ENCODE measurements at regions of chr4 and their contacts with region 1.

Region 1: DNA sequence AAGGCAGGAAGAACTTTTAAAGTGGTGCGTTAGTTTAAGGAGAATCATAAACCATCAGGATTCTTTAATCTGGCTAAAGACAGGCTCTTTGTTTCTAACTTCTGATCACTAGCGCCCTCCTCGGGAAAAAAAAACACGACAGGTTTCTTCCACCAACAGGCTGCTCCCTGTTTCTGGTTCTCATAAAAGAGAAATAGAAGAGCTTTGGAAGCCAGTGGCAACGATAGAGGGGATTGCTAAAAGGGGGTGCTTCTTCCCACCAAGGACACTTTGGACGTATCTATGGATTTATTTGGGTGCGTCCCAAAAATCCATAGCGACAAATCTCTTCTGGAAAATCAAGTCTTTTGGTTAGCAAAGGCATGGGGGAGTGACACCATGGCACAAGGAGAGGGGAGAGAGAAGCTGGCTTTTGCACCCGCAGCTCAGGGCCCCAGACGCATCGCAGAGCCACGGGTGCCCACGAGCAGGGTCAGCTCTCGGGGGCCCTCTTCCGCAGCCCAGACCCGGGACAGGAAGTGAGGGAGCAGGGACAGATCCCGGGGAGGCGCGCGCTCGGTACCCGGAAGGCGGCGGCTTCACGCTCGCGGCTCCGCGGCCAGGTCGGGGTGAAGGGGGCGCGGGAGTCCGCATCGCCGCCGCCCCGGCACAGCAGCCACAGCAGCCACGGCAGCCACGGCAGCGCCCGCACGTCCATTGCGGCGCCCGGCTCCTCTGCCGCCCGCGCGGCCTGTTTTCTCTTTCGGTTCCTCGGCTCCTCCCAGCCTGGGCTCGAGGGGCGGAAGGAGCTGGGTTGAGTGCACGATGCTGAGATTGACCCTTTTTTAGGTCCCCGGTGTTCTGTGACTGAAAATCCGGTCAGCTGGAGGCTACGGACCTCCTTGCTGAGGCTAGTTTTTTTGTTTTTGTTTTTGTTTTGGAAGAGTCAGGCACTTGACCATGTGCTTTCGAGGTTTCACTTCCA is at the start of gene CTSO:
- DNase-seq: peak; percentile 75
- H3K4me3 ChIP-seq: peak within 1 kb of the TSS; percentile 44 to 78 (median 71)
- H3K27ac ChIP-seq: peak within 1 kb of the TSS; percentile 96 to 97 (median 97)
- H3K4me1 ChIP-seq: peaks cover 7 to 29% (median 10%) of the 10 kb centered on the region in 4 donors
- H3K27me3 ChIP-seq: no peaks in the 10 kb centered on the region
- CTCF ChIP-seq: peak; percentile 57 to 71 (median 69)
- EP300 ChIP-seq: no peak
- POLR2A ChIP-seq: peak; percentile 57
- total RNA-seq, gene CTSO: 8.2 to 18.7 (median 12.5) TPM in 3 of 4 donors, not detected in the other

Region 2: DNA sequence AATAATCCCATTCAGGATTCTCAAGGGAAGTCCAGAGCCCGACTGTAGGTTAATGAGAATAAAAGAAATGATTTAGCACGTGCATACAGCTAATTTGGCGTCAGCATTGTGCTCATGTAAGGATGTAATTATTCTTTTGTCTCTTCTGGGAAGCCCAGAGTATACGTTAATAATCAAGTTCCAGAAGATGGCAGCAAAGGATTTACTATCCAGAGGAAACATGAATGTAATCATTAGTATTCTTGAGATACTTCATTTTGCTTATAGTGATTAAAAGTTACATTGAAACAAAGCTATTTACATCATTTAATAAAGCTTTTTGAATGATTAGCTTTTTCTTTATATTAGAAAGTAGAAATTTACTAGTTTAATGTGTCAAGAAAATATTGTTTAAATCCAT is 549.5 kb before region 1 on chr4:
- in situ Hi-C with region 1: no loop called
- intact Hi-C with region 1: loop called (anchors 5 kb)
- DNase-seq: no peak
- H3K4me3 ChIP-seq: no peak overlapping the region
- H3K27ac ChIP-seq: no peak overlapping the region
- H3K4me1 ChIP-seq: peaks cover 0 to 4% (median 0%) of the 10 kb centered on the region in 4 donors
- H3K27me3 ChIP-seq: no peaks in the 10 kb centered on the region
- CTCF ChIP-seq: peak in 2 of 5 experiments; percentile 15 to 28
- EP300 ChIP-seq: no peak
- POLR2A ChIP-seq: no peak

Region 3: GRCh38 chr4:155667568-155668511 is 285.6 kb before region 1 on chr4:
- in situ Hi-C with region 1: no loop called
- intact Hi-C with region 1: loop called (anchors 5 kb)
- DNase-seq: peak; percentile 35
- H3K4me3 ChIP-seq: peak overlapping the region; percentile 46 to 66 (median 52)
- H3K27ac ChIP-seq: peak overlapping the region; percentile 83 to 94 (median 86)
- H3K4me1 ChIP-seq: peaks cover 0 to 5% (median 3%) of the 10 kb centered on the region in 4 donors
- H3K27me3 ChIP-seq: peaks cover 34% of the 10 kb centered on the region
- CTCF ChIP-seq: no peak
- EP300 ChIP-seq: no peak
- POLR2A ChIP-seq: no peak

Region 4: DNA sequence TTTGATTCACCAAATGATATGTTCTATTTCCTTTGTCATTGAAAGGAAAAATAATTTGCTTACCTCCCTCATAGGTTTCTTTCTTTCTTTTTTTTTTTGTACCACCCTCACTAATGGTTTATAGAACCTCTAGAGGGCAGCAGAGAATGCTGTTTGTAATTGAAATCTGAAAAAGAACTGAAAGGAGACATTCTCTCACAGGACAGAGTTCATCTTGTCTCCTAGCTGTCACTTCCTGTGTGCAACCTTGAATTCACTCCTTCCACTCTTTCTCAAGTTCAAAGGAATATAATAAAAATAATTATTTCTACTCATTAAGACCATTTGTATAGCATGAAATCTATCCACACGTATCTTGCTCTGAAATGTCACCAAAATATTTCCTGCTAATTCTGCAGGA is 143.6 kb before region 1 on chr4:
- in situ Hi-C with region 1: loop called in 1 of 4 experiments (anchors 10 kb)
- intact Hi-C with region 1: no loop called
- DNase-seq: no peak
- H3K4me3 ChIP-seq: no peak overlapping the region
- H3K27ac ChIP-seq: no peak overlapping the region
- H3K4me1 ChIP-seq: peaks cover 0 to 11% (median 0%) of the 10 kb centered on the region in 4 donors
- H3K27me3 ChIP-seq: no peaks in the 10 kb centered on the region
- CTCF ChIP-seq: peak; percentile 48 to 73 (median 57)
- EP300 ChIP-seq: no peak
- POLR2A ChIP-seq: no peak

Region 5: DNA sequence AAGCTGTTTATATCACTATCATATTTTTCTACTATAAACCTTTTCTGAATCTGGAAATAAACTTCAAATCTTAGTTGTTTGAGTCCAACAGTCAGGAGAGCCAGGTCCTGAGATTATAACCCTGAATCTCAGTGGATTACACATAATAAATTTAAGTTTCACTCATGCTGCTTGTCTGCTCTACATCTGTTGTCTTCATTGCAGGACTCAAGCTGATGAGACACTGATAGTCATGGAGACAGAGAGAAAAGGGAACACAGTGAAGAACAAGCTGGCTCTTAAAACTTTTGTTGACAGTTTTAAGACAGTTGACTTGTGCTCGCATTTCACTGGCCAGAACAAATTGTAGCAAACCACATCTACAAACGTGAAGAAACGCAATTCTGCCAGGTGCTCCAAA is 327.3 kb after region 1 on chr4:
- in situ Hi-C with region 1: no loop called
- intact Hi-C with region 1: no loop called
- DNase-seq: no peak
- H3K4me3 ChIP-seq: no peak overlapping the region
- H3K27ac ChIP-seq: no peak overlapping the region
- H3K4me1 ChIP-seq: no peaks in the 10 kb centered on the region
- H3K27me3 ChIP-seq: no peaks in the 10 kb centered on the region
- CTCF ChIP-seq: no peak
- EP300 ChIP-seq: no peak
- POLR2A ChIP-seq: no peak

Region 6: GRCh38 chr4:156968479-156968984 is 1015.1 kb after region 1 on chr4:
- in situ Hi-C with region 1: loop called in 1 of 4 experiments (anchors 25 kb)
- intact Hi-C with region 1: no loop called
- DNase-seq: peak; percentile 70
- H3K4me3 ChIP-seq: peak overlapping the region in 1 of 4 donors; percentile 70
- H3K27ac ChIP-seq: peak overlapping the region; percentile 85 to 92 (median 88)
- H3K4me1 ChIP-seq: peaks cover 5 to 26% (median 13%) of the 10 kb centered on the region in 4 donors
- H3K27me3 ChIP-seq: no peaks in the 10 kb centered on the region
- CTCF ChIP-seq: peak; percentile 69 to 86 (median 78)
- EP300 ChIP-seq: no peak
- POLR2A ChIP-seq: no peak